ENCODE measurements at regions of chr11 and their contacts with region 1.

Region 1: DNA sequence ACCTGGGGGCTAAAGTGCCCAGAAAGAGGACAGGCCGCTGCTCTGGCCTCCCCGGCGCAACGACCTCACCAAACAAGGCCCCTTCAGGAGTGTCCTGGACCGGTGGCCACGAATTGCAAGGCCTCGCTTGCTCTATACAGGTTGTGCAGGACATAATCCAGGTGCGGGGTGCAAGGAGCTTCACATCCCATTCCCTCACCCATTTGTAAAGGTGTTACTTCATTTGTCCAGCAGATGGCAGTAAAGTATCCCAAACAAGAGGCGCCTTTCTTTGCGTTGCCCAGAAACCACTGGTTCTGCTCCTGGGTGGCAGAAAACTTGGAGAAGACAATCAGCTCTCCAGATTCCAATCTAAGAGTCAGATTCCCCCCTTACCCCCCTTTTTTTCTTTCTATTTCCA is 35.9 kb upstream of the PRDM11 start:
- DNase-seq: no peak
- ATAC-seq: peak; percentile 78
- H3K4me3 Mint-ChIP-seq: no peak overlapping the region
- H3K27ac Mint-ChIP-seq: no peak overlapping the region
- H3K4me1 Mint-ChIP-seq: no peaks in the 10 kb centered on the region
- H3K27me3 Mint-ChIP-seq: peaks cover 17% of the 10 kb centered on the region
- CTCF ChIP-seq: peak; percentile 66

Region 2: GRCh38 chr11:44943118-44943517 is 167.4 kb before region 1 on chr11:
- CTCF ChIA-PET with region 1: interaction called, 361 read pairs
- POLR2A ChIA-PET with region 1: no interaction called
- DNase-seq: no peak
- ATAC-seq: no peak
- H3K4me3 Mint-ChIP-seq: no peak overlapping the region
- H3K27ac Mint-ChIP-seq: 0 out of 2 replicates have a peak overlapping the region, but pooled peaks have one; percentile 71
- H3K4me1 Mint-ChIP-seq: peaks cover 50% of the 10 kb centered on the region
- H3K27me3 Mint-ChIP-seq: no peaks in the 10 kb centered on the region
- CTCF ChIP-seq: no peak

Region 3: GRCh38 chr11:45133871-45134270 is 23.3 kb after region 1 on chr11:
- CTCF ChIA-PET with region 1: interaction called, 17 read pairs
- POLR2A ChIA-PET with region 1: no interaction called
- DNase-seq: no peak
- ATAC-seq: no peak
- H3K4me3 Mint-ChIP-seq: no peak overlapping the region
- H3K27ac Mint-ChIP-seq: no peak overlapping the region
- H3K4me1 Mint-ChIP-seq: no peaks in the 10 kb centered on the region
- H3K27me3 Mint-ChIP-seq: peaks cover 65% of the 10 kb centered on the region
- CTCF ChIP-seq: no peak

Region 4: DNA sequence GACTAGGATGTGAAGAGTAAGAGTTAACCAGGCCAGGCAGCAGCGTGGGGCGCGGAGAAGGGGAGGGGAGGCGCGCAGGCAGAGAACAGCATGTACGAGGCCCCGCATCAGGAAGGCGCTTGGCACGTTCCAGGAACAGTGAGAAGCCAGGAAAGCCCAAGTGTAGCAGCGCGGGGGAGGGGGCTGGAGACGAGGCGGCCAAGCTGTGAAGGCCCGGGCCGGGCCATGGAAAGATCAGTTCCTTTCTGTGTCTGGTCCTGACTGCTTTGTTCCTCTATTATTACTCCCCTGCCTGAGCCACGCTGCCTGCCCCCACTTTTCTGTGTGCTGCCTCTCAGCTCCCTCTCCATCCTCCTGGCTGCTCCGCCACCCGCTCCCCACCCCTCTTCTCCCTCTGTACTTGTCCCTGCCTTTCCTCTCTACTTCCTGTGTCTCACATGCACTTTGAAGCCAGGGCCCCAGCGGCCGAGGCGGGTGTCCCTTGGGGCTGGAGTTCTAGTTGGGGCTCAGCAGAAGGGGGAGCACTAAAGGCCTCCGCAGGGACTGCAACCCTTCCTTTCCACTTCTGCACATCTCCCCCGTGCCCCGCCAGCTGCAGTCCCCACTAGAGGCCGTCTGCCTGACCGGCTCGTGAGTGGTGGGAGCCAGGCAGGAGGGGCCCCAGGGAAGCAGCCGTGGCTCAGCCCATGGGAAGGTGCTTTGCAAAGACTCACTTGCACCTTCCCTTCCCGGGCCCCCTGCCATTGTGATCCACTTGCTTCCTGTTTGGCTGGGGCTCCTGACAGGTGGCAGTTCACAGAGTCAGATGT is 99.5 kb after region 1 on chr11:
- CTCF ChIA-PET with region 1: interaction called, 25 read pairs
- POLR2A ChIA-PET with region 1: no interaction called
- DNase-seq: peak; percentile 72
- ATAC-seq: peak; percentile 76
- H3K4me3 Mint-ChIP-seq: no peak overlapping the region; the same call in 1 of the 2 replicates
- H3K27ac Mint-ChIP-seq: peak overlapping the region; percentile 73; the same call in 1 of the 2 replicates
- H3K4me1 Mint-ChIP-seq: peaks cover 21% of the 10 kb centered on the region
- H3K27me3 Mint-ChIP-seq: no peaks in the 10 kb centered on the region
- CTCF ChIP-seq: no peak

Region 5: GRCh38 chr11:45252134-45252855 is 141.7 kb after region 1 on chr11:
- CTCF ChIA-PET with region 1: interaction called, 41 read pairs
- POLR2A ChIA-PET with region 1: no interaction called
- DNase-seq: peak; percentile 91
- ATAC-seq: peak; percentile 99
- H3K4me3 Mint-ChIP-seq: no peak overlapping the region
- H3K27ac Mint-ChIP-seq: no peak overlapping the region
- H3K4me1 Mint-ChIP-seq: 0 out of 2 replicates have a peak, but pooled peaks cover 3% of the 10 kb centered on the region
- H3K27me3 Mint-ChIP-seq: no peaks in the 10 kb centered on the region; the same call in 1 of the 2 replicates
- CTCF ChIP-seq: peak; percentile 93

Region 6: GRCh38 chr11:45339729-45340519 is 229.4 kb after region 1 on chr11:
- CTCF ChIA-PET with region 1: interaction called, 11 read pairs
- POLR2A ChIA-PET with region 1: no interaction called
- DNase-seq: peak; percentile 98
- ATAC-seq: peak; percentile 99
- H3K4me3 Mint-ChIP-seq: peak overlapping the region; percentile 58
- H3K27ac Mint-ChIP-seq: peak overlapping the region; percentile 26; the same call in 1 of the 2 replicates
- H3K4me1 Mint-ChIP-seq: peaks cover 40% of the 10 kb centered on the region
- H3K27me3 Mint-ChIP-seq: no peaks in the 10 kb centered on the region; the same call in 1 of the 2 replicates
- CTCF ChIP-seq: peak; percentile 95